ENCODE measurements at regions of chr1 and their contacts with region 1.

Region 1: DNA sequence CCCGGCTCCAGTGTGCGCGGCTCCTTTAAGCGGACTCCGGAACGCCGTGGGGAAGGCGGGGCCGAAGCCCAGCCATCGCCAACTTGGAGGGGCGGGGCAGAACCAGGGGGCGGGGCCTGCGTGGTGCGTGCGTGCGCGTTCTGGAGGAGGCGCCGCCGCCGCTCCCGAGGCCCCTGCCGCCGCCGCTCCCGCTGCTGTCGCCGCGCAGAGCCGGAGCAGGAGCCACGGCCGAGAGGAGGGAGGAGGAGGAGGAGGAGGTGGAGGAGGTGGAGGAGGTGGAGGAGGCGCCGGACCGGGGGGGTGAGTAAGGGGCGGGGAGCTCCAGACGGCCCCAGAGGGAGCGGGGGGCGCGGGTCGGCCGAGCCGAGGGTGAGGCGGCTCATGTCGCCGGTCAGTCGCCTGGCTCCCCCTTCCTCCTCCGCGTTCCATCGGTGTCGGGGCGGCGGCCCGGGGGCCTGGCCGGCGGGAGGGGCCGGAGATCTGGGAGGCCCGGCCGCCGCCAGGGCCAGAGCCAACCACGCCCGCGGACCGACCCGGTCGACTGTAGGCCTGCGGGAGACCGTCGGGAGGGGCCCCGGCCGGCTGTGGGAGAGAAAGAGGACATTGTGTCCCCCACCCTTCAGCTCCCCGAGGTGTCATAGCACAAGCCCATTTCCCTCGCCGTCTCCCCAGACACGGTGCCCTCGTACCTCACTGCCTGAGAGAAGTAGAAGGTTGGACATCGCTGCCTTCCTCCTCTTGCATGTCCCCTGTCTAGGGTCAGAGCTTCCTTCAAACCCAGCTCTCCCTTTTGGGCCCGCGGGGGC is at the start of gene RAP1A:
- DNase-seq: peak; percentile 81 to 98 (median 90)
- ATAC-seq: peak; percentile 73 to 80
- H3K4me3 Mint-ChIP-seq: peak within 1 kb of the TSS; percentile 92 to 99 (median 98)
- H3K27ac Mint-ChIP-seq: peak within 1 kb of the TSS; percentile 85 to 98 (median 94)
- H3K4me1 Mint-ChIP-seq: peaks cover 44 to 80% (median 73%) of the 10 kb centered on the region in 4 donors
- H3K27me3 Mint-ChIP-seq: no peaks in the 10 kb centered on the region
- polyA plus RNA-seq, gene RAP1A: 43.4 to 53.9 (median 50.0) TPM

Region 2: GRCh38 chr1:111553196-111553595 is 66.6 kb before region 1 on chr1:
- POLR2A ChIA-PET with region 1: no interaction called
- DNase-seq: no peak
- ATAC-seq: no peak
- H3K4me3 Mint-ChIP-seq: no peak overlapping the region
- H3K27ac Mint-ChIP-seq: no peak overlapping the region
- H3K4me1 Mint-ChIP-seq: peaks cover 0 to 6% (median 0%) of the 10 kb centered on the region in 4 donors
- H3K27me3 Mint-ChIP-seq: peaks cover 0 to 4% (median 0%) of the 10 kb centered on the region in 5 donors

Region 3: DNA sequence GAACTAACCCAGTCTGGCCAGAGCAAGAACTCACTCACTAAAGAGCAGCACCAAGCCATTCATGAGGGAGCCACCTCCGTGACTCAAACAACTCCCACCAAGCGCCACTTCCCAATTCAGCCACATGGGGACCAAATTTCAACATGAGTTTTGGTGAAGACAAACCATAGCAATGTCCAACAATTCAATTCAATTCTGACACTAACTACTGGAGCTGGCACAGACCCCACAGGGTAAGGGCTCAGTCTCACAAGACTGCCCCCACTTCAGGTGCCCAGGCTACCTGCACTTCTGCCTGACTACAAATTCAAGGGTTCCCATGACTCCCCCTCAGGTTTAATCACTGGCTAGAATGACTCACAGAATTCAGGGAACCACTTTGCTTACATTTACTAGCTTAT is 49.1 kb before region 1 on chr1:
- POLR2A ChIA-PET with region 1: no interaction called
- DNase-seq: peak in 8 of 10 donors; percentile 9 to 64 (median 32)
- ATAC-seq: peak; percentile 40 to 58
- H3K4me3 Mint-ChIP-seq: no peak overlapping the region
- H3K27ac Mint-ChIP-seq: peak overlapping the region in 2 of 10 donors; percentile 4 to 34
- H3K4me1 Mint-ChIP-seq: peaks cover 7 to 14% (median 9%) of the 10 kb centered on the region in 4 donors
- H3K27me3 Mint-ChIP-seq: no peaks in the 10 kb centered on the region

Region 4: DNA sequence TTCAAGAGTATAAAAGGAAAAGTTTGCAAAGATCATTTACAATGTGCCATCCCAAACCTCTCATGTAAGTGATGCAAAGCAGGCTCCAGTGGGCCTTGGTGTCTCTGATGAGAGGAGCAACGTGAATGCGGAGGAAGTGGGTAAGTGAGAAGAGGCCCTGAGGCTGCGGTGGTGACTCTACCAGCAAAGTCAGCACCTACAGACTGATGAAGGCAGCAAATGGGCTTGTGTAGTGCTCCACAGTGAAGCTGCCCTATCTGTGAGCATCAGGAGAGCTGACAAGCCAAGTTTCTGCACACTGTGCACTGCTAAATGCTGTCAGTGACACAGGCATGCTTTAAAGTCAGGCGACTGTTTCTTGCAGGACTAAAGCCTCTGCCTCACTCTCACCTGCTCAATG is 15.9 kb before region 1 on chr1:
- POLR2A ChIA-PET with region 1: interaction called, 42 read pairs
- DNase-seq: peak; percentile 40 to 88 (median 72)
- ATAC-seq: peak; percentile 98
- H3K4me3 Mint-ChIP-seq: peak overlapping the region; percentile 31 to 83 (median 60)
- H3K27ac Mint-ChIP-seq: peak overlapping the region; percentile 80 to 97 (median 89)
- H3K4me1 Mint-ChIP-seq: peaks cover 32 to 75% (median 74%) of the 10 kb centered on the region in 4 donors
- H3K27me3 Mint-ChIP-seq: no peaks in the 10 kb centered on the region

Region 5: DNA sequence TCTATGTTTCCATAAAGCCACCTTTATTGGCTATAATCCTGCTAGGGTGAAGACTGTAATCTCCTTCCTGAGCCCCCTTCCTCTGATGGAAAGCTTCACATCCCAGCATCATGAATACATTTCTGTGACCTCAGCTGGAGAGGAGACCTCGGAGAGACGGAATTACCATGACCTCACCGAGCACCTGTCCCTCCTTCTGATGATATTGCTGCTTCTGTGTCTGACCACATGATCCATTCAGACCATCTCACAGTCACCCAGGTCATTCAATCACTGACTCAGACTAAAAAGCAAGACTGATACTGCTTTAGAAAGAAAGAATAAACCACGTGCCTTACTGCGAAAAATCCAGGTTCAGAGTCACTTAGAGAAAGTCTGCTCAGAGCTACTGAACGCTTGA is 360.8 kb after region 1 on chr1:
- POLR2A ChIA-PET with region 1: no interaction called
- DNase-seq: no peak
- ATAC-seq: no peak
- H3K4me3 Mint-ChIP-seq: no peak overlapping the region
- H3K27ac Mint-ChIP-seq: no peak overlapping the region
- H3K4me1 Mint-ChIP-seq: peaks cover 0 to 2% (median 0%) of the 10 kb centered on the region in 4 donors
- H3K27me3 Mint-ChIP-seq: peaks cover 31 to 71% (median 38%) of the 10 kb centered on the region in 5 donors